Activated CD8-positive, alpha-beta T cell treated with anti-CD3 and anti-CD28 coated beads for 36 hours (primary cell): ENCODE measurements at regions of chr19 and their contacts with region 1.

Region 1: GRCh38 chr19:4803736-4804695 is 12.5 kb downstream of the FEM1A start:
- DNase-seq: peak; percentile 83
- ATAC-seq: peak; percentile 99
- H3K4me3 Mint-ChIP-seq: peak overlapping the region; percentile 15
- H3K27ac Mint-ChIP-seq: no peak overlapping the region
- H3K4me1 Mint-ChIP-seq: no peaks in the 10 kb centered on the region
- H3K27me3 Mint-ChIP-seq: no peaks in the 10 kb centered on the region
- CTCF ChIP-seq: peak; percentile 99

Region 2: DNA sequence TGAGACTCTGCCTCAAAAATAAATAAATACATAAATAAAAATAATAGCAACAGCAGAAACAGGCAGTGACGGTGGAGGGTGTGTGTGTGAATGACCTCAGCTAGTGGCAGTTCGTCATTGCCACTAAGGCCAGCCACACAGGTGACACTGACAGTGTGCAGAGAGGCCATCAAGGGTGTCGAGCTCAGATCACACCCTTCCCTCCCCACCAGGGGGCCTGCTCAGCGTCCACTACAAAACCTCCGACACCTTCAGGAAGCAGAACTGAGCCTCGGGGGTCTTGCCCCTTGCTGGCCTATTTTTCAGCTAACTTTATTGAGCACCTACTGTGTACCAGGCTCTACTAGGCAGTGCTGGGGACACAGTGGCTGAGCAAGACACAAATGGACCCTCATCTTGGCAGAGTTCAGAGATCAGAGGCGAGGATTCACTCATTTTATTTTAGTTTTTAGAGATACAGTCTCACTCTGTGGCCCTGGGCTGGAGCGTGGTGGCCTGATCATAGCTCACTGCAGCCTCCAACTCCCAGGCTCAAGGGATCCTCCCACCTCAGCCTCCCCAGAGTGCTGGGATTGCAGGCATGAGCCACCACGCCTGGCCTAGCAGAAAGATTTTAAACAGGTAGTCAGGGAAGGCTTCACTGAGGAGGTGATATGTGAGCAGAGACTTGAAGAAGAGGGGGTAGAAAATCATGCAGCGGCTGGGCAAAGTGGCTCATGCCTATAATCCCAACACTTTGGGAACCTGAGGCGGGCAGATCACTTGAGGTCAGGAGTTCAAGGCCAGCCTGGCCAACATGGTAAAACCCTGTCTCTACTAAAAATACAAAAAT is 214.2 kb before region 1 on chr19:
- CTCF ChIA-PET with region 1: no interaction called
- POLR2A ChIA-PET with region 1: no interaction called
- intact Hi-C with region 1: no loop called
- DNase-seq: peak; percentile 52
- ATAC-seq: peak; percentile 69
- H3K4me3 Mint-ChIP-seq: no peak overlapping the region
- H3K27ac Mint-ChIP-seq: no peak overlapping the region
- H3K4me1 Mint-ChIP-seq: no peaks in the 10 kb centered on the region
- H3K27me3 Mint-ChIP-seq: peaks cover 38% of the 10 kb centered on the region
- CTCF ChIP-seq: peak; percentile 24

Region 3: DNA sequence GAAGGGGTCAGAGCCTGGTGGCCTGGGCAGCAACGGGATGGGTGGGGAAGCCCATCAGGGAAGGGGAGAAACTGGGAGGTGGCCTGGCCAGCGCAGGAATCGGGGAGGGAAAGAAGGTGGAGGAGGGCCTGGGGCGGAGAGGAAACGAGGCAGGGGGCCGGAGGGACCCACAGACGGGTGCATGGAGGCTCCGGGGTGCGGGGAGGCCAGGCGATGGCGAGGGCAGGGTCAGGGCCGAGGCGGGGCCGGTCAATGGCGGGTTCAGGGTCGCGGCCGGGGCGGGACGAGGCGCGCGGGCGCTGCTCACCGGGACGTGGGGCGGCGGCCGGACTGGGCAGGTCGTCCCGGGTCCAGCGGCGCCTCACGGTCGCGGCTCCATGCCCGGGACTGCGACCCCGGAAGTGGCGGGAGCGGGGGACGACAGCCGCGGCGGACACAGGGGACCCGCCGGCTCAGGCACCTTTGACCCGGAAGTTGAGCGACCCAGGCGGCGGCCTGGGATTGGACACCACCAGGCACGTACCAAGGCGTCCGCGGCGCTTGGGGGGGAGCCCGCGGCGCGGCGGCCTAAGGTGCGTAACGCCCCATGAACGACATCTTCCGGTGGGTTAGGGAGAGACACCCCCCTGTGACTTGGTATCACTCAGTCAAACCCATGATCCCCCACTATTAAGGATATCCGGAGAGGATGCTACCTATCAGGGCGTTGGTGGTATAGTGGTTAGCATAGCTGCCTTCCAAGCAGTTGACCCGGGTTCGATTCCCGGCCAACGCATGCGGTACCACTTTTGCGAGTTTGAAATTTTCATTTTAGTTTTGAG is 80.4 kb before region 1 on chr19 and contains the start of gene DPP9:
- CTCF ChIA-PET with region 1: interaction called, 31 read pairs
- POLR2A ChIA-PET with region 1: no interaction called
- intact Hi-C with region 1: no loop called
- DNase-seq: peak; percentile 98
- ATAC-seq: peak; percentile 97
- H3K4me3 Mint-ChIP-seq: peak within 1 kb of the TSS; percentile 99
- H3K27ac Mint-ChIP-seq: peak within 1 kb of the TSS; percentile 96
- H3K4me1 Mint-ChIP-seq: peaks cover 23% of the 10 kb centered on the region
- H3K27me3 Mint-ChIP-seq: peaks cover 5% of the 10 kb centered on the region
- CTCF ChIP-seq: no peak
- total RNA-seq, gene DPP9: 60.4 to 64.0 TPM

Region 4: GRCh38 chr19:4732680-4733114 is 71.3 kb before region 1 on chr19:
- CTCF ChIA-PET with region 1: interaction called, 31 read pairs
- POLR2A ChIA-PET with region 1: no interaction called
- intact Hi-C with region 1: no loop called
- DNase-seq: peak; percentile 67
- ATAC-seq: peak; percentile 90
- H3K4me3 Mint-ChIP-seq: peak overlapping the region; percentile 9
- H3K27ac Mint-ChIP-seq: no peak overlapping the region
- H3K4me1 Mint-ChIP-seq: peaks cover 5% of the 10 kb centered on the region
- H3K27me3 Mint-ChIP-seq: no peaks in the 10 kb centered on the region
- CTCF ChIP-seq: peak; percentile 84